ENCODE measurements at regions of chr2 and their contacts with region 1.

Region 1: GRCh38 chr2:102350137-102350793 is 5.3 kb upstream of the IL18R1 start:
- DNase-seq: no peak
- H3K4me3 ChIP-seq: no peak overlapping the region
- H3K27ac ChIP-seq: no peak overlapping the region
- H3K4me1 ChIP-seq: no peaks in the 10 kb centered on the region
- H3K27me3 ChIP-seq: no peaks in the 10 kb centered on the region
- CTCF ChIP-seq: no peak

Region 2: GRCh38 chr2:102387763-102388546 is 37.7 kb after region 1 on chr2:
- CTCF ChIA-PET with region 1: no interaction called
- dilution Hi-C with region 1: loop called (anchors 5 kb)
- in situ Hi-C with region 1: no loop called
- intact Hi-C with region 1: no loop called
- DNase-seq: no peak
- H3K4me3 ChIP-seq: no peak overlapping the region
- H3K27ac ChIP-seq: no peak overlapping the region
- H3K4me1 ChIP-seq: peaks cover 6% of the 10 kb centered on the region
- H3K27me3 ChIP-seq: no peaks in the 10 kb centered on the region
- CTCF ChIP-seq: no peak

Region 3: GRCh38 chr2:102436323-102436722 is 86.1 kb after region 1 on chr2:
- CTCF ChIA-PET with region 1: no interaction called
- dilution Hi-C with region 1: loop called (anchors 5 kb)
- in situ Hi-C with region 1: no loop called
- intact Hi-C with region 1: no loop called
- DNase-seq: peak; percentile 37
- H3K4me3 ChIP-seq: no peak overlapping the region
- H3K27ac ChIP-seq: no peak overlapping the region
- H3K4me1 ChIP-seq: peaks cover 7% of the 10 kb centered on the region
- H3K27me3 ChIP-seq: no peaks in the 10 kb centered on the region
- CTCF ChIP-seq: no peak

Region 4: GRCh38 chr2:102473020-102473419 is 122.8 kb after region 1 on chr2 and contains the start of gene SLC9A4:
- CTCF ChIA-PET with region 1: no interaction called
- dilution Hi-C with region 1: no loop called
- in situ Hi-C with region 1: no loop called
- intact Hi-C with region 1: no loop called
- DNase-seq: peak; percentile 39
- H3K4me3 ChIP-seq: no peak within 1 kb of the TSS
- H3K27ac ChIP-seq: no peak within 1 kb of the TSS
- H3K4me1 ChIP-seq: no peaks in the 10 kb centered on the region
- H3K27me3 ChIP-seq: peaks cover 2% of the 10 kb centered on the region
- CTCF ChIP-seq: peak; percentile 90 to 91
- total RNA-seq, gene SLC9A4: 0.07 TPM in 1 of 2 donors, not detected in the other

Region 5: GRCh38 chr2:103123516-103123915 is 773.3 kb after region 1 on chr2:
- CTCF ChIA-PET with region 1: no interaction called
- dilution Hi-C with region 1: no loop called
- in situ Hi-C with region 1: no loop called
- intact Hi-C with region 1: no loop called
- DNase-seq: no peak
- H3K4me3 ChIP-seq: no peak overlapping the region
- H3K27ac ChIP-seq: no peak overlapping the region
- H3K4me1 ChIP-seq: no peaks in the 10 kb centered on the region
- H3K27me3 ChIP-seq: no peaks in the 10 kb centered on the region
- CTCF ChIP-seq: no peak

Measured in mammary epithelial cell (primary cell).